Mammary epithelial cell (primary cell): ENCODE measurements at regions of chr15 and their contacts with region 1.

Region 1: GRCh38 chr15:88546248-88547129 is at the start of gene DET1:
- DNase-seq: peak; percentile 97
- H3K4me3 ChIP-seq: peak within 1 kb of the TSS; percentile 57 to 66 (median 60)
- H3K27ac ChIP-seq: peak within 1 kb of the TSS; percentile 37
- H3K4me1 ChIP-seq: no peaks in the 10 kb centered on the region
- H3K27me3 ChIP-seq: no peaks in the 10 kb centered on the region
- CTCF ChIP-seq: peak; percentile 73 to 86
- total RNA-seq, gene DET1: 2.4 to 3.0 TPM

Region 2: GRCh38 chr15:88467073-88467934 is 79.2 kb before region 1 on chr15 and contains the starts of genes MRPL46 and MRPS11:
- CTCF ChIA-PET with region 1: no interaction called
- dilution Hi-C with region 1: no loop called
- in situ Hi-C with region 1: no loop called
- intact Hi-C with region 1: loop called (anchors 1 kb)
- DNase-seq: peak; percentile 80
- H3K4me3 ChIP-seq: peak within 1 kb of the TSS; percentile 78 to 90 (median 87)
- H3K27ac ChIP-seq: peak within 1 kb of the TSS; percentile 96
- H3K4me1 ChIP-seq: peaks cover 15% of the 10 kb centered on the region
- H3K27me3 ChIP-seq: no peaks in the 10 kb centered on the region
- CTCF ChIP-seq: no peak
- total RNA-seq, gene MRPL46: 10.8 to 21.6 TPM
- total RNA-seq, gene MRPS11: 21.2 to 60.2 TPM

Region 3: GRCh38 chr15:88512601-88513000 is 33.9 kb before region 1 on chr15:
- CTCF ChIA-PET with region 1: no interaction called
- dilution Hi-C with region 1: no loop called
- in situ Hi-C with region 1: no loop called
- intact Hi-C with region 1: no loop called
- DNase-seq: no peak
- H3K4me3 ChIP-seq: no peak overlapping the region
- H3K27ac ChIP-seq: no peak overlapping the region
- H3K4me1 ChIP-seq: no peaks in the 10 kb centered on the region
- H3K27me3 ChIP-seq: no peaks in the 10 kb centered on the region
- CTCF ChIP-seq: no peak

Region 4: DNA sequence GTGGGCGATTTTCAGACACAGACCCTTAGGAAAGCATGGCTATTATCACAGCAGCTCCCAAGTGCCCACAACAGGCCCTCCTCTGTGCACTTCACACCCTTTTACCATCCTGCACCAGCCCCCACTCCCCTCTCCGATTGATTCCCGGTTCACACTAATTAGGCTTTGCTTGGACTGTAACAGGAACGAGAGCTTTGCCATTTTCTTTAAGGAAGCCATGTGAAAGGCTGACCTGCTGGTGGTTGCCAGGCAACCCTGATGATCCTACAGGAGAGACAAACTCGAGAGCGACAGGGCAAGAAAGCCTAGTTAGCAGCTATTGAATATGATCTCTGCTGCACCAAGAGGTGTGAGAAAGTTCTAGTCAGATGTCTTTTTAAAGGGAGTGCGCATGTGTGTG is 28.2 kb after region 1 on chr15:
- CTCF ChIA-PET with region 1: no interaction called
- dilution Hi-C with region 1: no loop called
- in situ Hi-C with region 1: no loop called
- intact Hi-C with region 1: no loop called
- DNase-seq: no peak
- H3K4me3 ChIP-seq: no peak overlapping the region
- H3K27ac ChIP-seq: no peak overlapping the region
- H3K4me1 ChIP-seq: no peaks in the 10 kb centered on the region
- H3K27me3 ChIP-seq: no peaks in the 10 kb centered on the region
- CTCF ChIP-seq: no peak

Region 5: GRCh38 chr15:88586401-88587162 is 40.1 kb after region 1 on chr15:
- CTCF ChIA-PET with region 1: no interaction called
- dilution Hi-C with region 1: no loop called
- in situ Hi-C with region 1: no loop called
- intact Hi-C with region 1: no loop called
- DNase-seq: peak; percentile 58
- H3K4me3 ChIP-seq: no peak overlapping the region
- H3K27ac ChIP-seq: no peak overlapping the region
- H3K4me1 ChIP-seq: no peaks in the 10 kb centered on the region
- H3K27me3 ChIP-seq: peaks cover 4% of the 10 kb centered on the region
- CTCF ChIP-seq: no peak